Posterior cingulate gyrus (tissue), 11 donors: ENCODE measurements at regions of chr10 and their contacts with region 1.

Region 1: GRCh38 chr10:61135276-61135721 is 191.3 kb upstream of the RHOBTB1 start:
- DNase-seq: no peak

Region 2: GRCh38 chr10:61188691-61189090 is 53.4 kb after region 1 on chr10:
- intact Hi-C with region 1: no loop called
- DNase-seq: no peak

Region 3: DNA sequence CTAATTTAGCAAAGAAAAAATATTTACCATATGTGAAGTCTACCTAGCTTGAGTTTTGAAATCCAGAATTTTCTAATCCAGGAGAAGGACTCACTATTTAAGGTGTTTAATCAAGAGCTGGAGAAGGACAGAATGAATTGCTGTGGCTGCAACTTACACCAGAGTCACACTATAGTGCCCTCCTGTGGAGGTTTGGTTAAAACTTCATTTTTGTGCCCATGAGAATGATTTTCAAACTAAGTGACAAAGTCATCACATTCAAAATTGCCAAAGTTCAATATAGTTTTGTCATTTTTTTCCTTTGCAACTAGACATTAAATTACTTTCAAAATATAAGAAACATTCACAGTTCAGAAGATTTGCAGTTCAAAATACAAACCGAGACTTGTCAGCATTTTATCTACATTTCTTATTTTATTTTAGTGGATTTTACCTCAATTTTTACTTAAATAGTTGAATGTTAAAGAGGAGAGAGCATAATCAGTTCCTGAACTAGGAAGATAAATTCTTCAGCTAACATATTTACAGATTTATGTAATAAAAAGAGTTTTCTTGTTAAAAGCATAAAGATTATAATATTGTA is 598.1 kb after region 1 on chr10:
- intact Hi-C with region 1: loop called (anchors 5 kb)
- DNase-seq: peak in 1 of 10 donors; percentile 14